Left cardiac atrium (tissue), 4 donors: ENCODE measurements at regions of chr9 and their contacts with region 1.

Region 1: GRCh38 chr9:114681594-114682332 is at the start of gene TEX48:
- DNase-seq: peak; percentile 54
- ATAC-seq: peak; percentile 73 to 78
- total RNA-seq, gene TEX48: not detected

Region 2: DNA sequence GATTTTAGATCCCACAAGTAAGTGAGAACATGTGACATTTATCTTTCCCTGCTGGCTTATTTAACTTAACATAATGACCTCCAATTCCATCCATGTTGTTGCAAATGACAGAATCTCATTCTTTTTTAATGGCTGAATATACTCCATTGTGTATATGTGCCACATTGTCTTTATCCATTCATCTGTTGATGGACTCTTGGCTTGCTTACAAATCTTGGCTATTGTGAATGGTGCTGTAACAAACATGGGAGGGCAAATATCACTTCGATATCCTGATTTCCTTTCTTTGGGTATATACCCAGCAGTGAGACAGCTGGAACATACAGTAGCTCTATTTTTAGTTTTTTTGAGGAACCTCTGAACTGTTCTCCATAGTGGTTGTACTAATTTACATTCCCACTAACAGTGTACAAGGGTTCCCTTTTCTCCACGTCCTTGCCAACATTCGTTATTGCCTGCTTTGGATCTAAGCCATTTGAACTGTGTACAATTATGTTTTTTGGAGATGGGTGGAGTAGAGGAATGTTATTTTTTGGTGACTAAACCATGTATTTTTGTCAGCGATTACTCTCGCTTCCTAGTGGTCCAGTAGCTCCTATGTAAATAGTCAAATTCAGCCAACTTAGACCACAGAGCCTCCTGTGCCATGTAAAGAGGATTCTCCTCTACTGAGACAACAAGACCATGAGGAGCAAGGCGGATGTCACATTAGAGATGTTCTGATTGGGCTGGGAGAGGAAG is 63.5 kb after region 1 on chr9:
- intact Hi-C with region 1: loop called in 1 of 2 experiments (anchors 10 kb)
- DNase-seq: no peak
- ATAC-seq: peak; percentile 43 to 47

Region 3: GRCh38 chr9:114906908-114907571 is 225.3 kb after region 1 on chr9:
- intact Hi-C with region 1: loop called in 1 of 2 experiments (anchors 5 kb)
- DNase-seq: no peak
- ATAC-seq: peak; percentile 29 to 36

Region 4: DNA sequence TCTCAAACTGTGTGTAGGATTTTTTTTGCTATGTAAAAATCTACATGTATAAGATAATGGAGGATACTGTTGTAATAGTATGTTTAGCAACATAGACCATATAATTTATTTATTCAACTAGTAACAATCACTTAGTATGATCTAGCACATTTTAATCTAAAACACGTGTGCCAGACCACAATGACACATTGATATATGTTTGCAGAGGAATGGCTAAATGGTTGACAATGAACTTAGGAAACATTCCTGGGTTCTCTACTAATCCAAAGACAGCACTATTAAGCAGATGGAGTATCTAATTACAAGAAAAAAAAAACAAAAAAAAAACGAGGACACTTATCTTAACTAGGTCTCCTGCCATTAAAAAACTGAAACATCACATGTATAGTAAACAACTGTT is 1210.2 kb after region 1 on chr9:
- intact Hi-C with region 1: no loop called
- DNase-seq: no peak
- ATAC-seq: no peak